Activated T-helper 2 cell treated with anti-CD3 and anti-CD28 coated beads, Interferon-gamma antibody, Interleukin-2, Interleukin-4, amounts not matched to agents 10 μg/mL and 5 μg/mL and 100 μg/mL, durations not matched to agents 14 hours and 24 hours and 36 hours (primary cell): ENCODE measurements at regions of chr13 and their contacts with region 1.

Region 1: GRCh38 chr13:94416454-94417080 is 62.9 kb downstream of the DCT start:
- DNase-seq: no peak
- H3K4me3 Mint-ChIP-seq: no peak overlapping the region
- H3K27ac Mint-ChIP-seq: no peak overlapping the region
- H3K4me1 Mint-ChIP-seq: peaks cover 22% of the 10 kb centered on the region
- H3K27me3 Mint-ChIP-seq: no peaks in the 10 kb centered on the region

Region 2: GRCh38 chr13:93794197-93794885 is 622.2 kb before region 1 on chr13:
- intact Hi-C with region 1: loop called (anchors 2 kb)
- DNase-seq: peak; percentile 16
- H3K4me3 Mint-ChIP-seq: no peak overlapping the region
- H3K27ac Mint-ChIP-seq: no peak overlapping the region
- H3K4me1 Mint-ChIP-seq: peaks cover 8% of the 10 kb centered on the region
- H3K27me3 Mint-ChIP-seq: peaks cover 15% of the 10 kb centered on the region

Region 3: GRCh38 chr13:94351292-94351990 is 65.1 kb before region 1 on chr13:
- intact Hi-C with region 1: no loop called
- DNase-seq: no peak
- H3K4me3 Mint-ChIP-seq: no peak overlapping the region
- H3K27ac Mint-ChIP-seq: peak overlapping the region; percentile 8
- H3K4me1 Mint-ChIP-seq: peaks cover 19% of the 10 kb centered on the region
- H3K27me3 Mint-ChIP-seq: peaks cover 4% of the 10 kb centered on the region

Region 4: DNA sequence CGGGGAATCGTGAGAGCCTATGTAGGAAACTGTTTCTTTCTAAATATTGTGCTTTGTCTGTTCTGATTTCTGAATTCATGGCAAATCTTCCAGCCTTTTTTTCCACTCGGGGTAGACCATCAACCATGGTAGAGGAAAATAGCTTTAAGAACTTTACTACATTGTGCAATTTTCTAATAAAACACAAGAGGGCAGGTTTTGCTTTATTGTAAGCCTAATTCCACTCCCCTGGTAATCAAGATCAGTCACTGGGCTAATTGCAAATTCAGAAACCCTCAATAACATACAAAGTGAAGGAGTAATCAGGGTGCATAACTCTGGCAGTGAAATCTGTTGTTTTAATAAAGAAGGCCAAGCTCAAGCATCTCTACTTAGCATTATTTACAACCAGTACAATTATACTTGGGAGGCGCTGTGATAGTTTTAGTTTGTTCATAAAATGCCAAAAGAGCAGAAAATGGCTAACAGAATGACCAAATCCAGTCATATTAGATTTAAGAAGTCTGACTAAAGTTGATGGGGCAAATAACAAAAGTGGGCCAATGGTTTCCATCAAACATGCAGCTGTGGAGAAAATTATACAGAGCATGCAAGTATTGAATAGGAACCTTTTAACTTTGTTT is 19.1 kb after region 1 on chr13:
- intact Hi-C with region 1: loop called (anchors 1 kb)
- DNase-seq: no peak
- H3K4me3 Mint-ChIP-seq: no peak overlapping the region
- H3K27ac Mint-ChIP-seq: no peak overlapping the region
- H3K4me1 Mint-ChIP-seq: peaks cover 21% of the 10 kb centered on the region
- H3K27me3 Mint-ChIP-seq: no peaks in the 10 kb centered on the region

Region 5: GRCh38 chr13:94601446-94602431 is 185.2 kb after region 1 on chr13 and contains the start of gene GPR180:
- intact Hi-C with region 1: loop called (anchors 1 kb)
- DNase-seq: peak; percentile 89
- H3K4me3 Mint-ChIP-seq: peak within 1 kb of the TSS; percentile 79
- H3K27ac Mint-ChIP-seq: peak within 1 kb of the TSS; percentile 55
- H3K4me1 Mint-ChIP-seq: peaks cover 24% of the 10 kb centered on the region
- H3K27me3 Mint-ChIP-seq: no peaks in the 10 kb centered on the region
- total RNA-seq, gene GPR180: 9.2 and 9.4 TPM in 2 replicates

Region 6: DNA sequence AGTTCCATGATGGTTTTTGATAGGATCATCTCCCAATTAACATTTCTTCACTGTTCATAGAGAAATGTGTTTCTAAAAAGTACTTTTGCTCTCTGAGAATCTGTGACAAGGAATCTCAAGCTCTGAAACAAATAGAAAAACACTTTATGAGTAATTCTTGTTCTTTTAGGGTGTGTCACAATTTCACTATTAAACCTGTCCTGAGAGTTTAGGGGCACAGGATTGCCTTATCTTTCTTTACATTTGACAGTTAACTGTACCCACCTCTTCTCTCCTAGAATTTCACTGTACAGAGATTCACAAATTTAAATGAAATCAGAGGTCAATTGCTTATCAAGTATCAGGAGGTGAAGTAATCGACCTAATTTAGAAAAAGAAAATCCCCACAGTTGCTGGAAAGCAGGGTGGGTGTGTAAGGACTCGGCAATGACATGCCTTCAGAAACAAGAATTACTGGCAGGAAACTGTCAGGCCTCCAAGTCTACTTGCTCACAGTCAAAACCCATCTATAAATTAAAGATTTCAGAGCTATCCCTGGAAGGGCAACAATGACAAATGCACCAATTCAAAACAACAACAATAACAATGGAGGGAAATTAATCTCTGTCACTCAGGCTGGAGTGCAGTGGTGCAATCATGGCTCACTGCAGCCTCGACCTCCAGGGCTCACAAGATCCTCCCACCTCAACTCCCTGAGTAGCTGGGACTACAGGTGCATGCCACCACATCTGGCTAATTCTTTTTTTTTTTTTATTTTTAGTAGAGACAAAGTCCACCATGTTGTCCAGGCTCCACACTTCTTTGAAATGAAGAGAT is 634.4 kb after region 1 on chr13:
- intact Hi-C with region 1: loop called (anchors 2 kb)
- DNase-seq: no peak
- H3K4me3 Mint-ChIP-seq: no peak overlapping the region
- H3K27ac Mint-ChIP-seq: peak overlapping the region; percentile 93
- H3K4me1 Mint-ChIP-seq: peaks cover 24% of the 10 kb centered on the region
- H3K27me3 Mint-ChIP-seq: no peaks in the 10 kb centered on the region